MCF 10A (cell line): ENCODE measurements at regions of chr1 and their contacts with region 1.

Region 1: DNA sequence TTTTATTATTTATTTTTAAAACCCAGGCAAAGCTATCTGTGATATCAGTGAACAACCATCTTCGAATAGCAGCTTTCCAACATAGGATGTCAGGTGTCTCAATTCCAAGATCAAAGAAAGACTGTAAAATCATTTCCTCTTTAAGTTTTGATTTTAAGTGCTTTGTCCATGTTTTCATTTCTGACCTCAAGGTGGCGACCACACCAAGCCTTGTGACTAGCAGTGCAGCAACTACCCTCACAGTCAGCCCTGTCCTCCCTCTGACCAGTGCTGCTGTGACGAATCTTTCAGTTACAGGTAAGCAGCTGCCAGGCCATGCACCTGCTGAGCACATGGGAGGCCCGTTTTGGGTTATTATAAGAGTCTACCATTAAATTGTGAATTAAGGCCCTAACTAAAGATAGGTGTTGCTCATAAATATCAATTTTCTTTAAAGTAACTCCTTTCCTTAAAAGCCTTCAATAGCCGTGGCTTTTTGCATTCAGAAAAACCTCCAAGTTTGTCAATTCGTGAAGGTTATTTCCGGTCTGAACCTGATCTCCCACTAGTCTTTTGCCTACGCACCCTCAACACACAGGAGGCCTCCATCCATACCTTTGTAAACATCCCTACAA is 117.0 kb downstream of the CD247 start:
- DNase-seq: peak; percentile 76
- H3K4me3 Mint-ChIP-seq: no peak overlapping the region
- H3K27ac Mint-ChIP-seq: peak overlapping the region; percentile 23
- H3K4me1 Mint-ChIP-seq: peaks cover 6% of the 10 kb centered on the region
- H3K27me3 Mint-ChIP-seq: no peaks in the 10 kb centered on the region
- CTCF ChIP-seq: peak; percentile 72

Region 2: GRCh38 chr1:167273027-167273800 is 128.2 kb before region 1 on chr1:
- CTCF ChIA-PET with region 1: interaction called, 34 read pairs
- POLR2A ChIA-PET with region 1: interaction called, 5 read pairs
- intact Hi-C with region 1: loop called (anchors 1 kb)
- DNase-seq: peak; percentile 86
- H3K4me3 Mint-ChIP-seq: no peak overlapping the region
- H3K27ac Mint-ChIP-seq: peak overlapping the region; percentile 23
- H3K4me1 Mint-ChIP-seq: peaks cover 42% of the 10 kb centered on the region
- H3K27me3 Mint-ChIP-seq: no peaks in the 10 kb centered on the region
- CTCF ChIP-seq: no peak

Region 3: DNA sequence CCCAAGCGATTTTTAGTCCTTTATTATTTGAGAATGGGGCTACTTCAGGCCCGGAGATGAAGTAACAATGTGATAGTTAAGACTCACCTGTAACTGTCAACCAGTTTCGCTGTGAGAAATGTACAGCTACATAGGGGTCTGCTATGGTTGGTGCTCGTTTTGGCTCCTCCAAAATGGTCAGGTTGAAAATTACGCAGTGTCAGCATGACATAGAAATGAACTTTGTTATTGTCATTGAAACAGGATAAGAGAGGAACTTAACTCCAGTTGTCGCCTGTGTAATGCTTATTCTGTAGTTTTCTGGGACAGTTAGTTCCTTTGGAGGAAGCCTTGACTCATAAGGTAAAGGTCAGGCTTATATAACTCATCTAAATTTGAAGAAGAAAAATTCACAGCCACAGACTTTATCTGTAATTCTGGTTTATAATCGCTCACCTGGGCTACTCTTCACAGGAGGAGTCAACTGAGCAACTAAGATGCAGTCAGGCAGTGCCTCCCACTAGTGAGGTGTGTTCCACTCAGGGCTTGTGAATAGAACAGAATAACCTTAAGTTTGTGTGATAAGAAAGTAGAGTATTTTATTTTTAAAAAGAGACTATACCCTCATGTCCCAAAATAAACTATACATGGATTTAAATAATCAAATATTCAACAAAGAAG is 14.0 kb before region 1 on chr1:
- CTCF ChIA-PET with region 1: interaction called, 24 read pairs
- POLR2A ChIA-PET with region 1: interaction called, 3 read pairs
- intact Hi-C with region 1: no loop called
- DNase-seq: no peak
- H3K4me3 Mint-ChIP-seq: no peak overlapping the region
- H3K27ac Mint-ChIP-seq: no peak overlapping the region
- H3K4me1 Mint-ChIP-seq: no peaks in the 10 kb centered on the region
- H3K27me3 Mint-ChIP-seq: no peaks in the 10 kb centered on the region
- CTCF ChIP-seq: no peak

Region 4: DNA sequence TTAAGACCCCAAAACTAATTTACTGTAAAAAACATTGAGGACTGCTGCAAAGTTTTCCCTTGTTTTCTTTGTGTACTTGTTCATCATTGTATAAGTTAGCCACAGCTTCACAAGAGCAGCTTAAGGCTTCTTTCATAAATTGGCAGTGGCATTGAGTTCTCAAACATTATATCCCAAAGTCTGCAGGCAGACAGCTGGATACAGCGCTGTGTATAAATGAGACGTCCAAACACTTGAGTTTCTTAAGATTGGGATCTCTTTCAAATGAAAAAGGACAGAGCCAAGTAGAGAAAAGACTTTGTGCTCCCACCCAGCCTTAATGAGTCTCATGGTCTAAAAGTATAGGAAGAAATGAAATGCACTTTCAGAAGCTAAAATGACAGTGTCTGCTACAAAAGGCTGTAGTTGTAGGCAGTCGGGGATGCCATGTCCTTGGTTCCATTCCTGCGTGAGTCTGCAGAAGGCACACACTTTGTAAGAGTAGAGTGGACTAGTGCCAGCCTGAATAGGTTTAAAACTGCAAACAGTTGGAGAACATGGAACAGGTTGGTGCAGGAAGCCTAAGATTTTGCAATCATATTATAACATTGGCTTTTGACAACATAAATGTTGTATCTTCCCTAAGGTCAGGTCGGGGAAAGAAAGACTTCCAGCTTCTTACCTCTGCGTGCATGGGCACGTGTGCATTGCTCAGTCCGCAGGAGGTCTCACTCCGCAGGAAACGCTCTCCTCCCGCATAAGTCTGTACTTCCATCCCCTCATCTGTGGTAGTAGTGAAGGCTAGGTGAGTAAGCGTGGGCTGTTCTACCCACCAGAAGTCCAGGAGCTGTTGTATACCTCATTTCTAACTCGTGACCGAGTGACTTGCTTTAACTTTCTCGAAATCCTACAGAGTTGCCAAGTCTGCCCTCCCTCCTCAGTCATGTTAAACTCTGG is 22.6 kb after region 1 on chr1:
- CTCF ChIA-PET with region 1: interaction called, 13 read pairs
- POLR2A ChIA-PET with region 1: no interaction called
- intact Hi-C with region 1: no loop called
- DNase-seq: no peak
- H3K4me3 Mint-ChIP-seq: no peak overlapping the region
- H3K27ac Mint-ChIP-seq: no peak overlapping the region
- H3K4me1 Mint-ChIP-seq: peaks cover 6% of the 10 kb centered on the region
- H3K27me3 Mint-ChIP-seq: no peaks in the 10 kb centered on the region
- CTCF ChIP-seq: no peak

Region 5: DNA sequence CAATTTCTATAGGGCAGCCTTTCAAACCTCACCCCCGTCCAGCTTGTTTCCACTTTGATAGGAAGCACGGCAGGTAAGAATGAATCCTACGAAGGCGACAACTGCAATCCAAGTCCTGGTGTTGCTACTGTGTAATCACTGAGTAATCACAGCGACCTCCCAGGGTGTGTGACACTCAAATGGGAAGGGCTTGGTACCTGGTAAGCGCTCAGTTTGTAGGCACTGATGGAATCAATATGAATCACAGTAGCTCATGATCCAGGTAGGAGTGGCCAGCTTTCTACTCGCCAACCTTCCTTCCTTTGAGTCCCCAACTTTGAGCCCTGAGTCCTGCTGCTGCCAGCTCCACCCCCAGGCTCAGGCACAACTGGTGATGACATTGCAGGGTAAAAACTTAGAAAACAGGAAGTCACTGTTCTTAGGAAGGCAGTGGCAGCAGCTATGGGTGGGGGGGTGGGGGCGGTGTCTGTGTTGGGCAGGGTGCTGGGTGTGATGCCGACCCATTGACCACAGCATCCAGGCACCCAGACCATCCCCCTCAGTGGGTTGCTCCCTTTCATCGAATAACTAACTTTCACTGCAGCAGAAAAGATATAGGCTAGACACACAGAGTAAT is 46.3 kb after region 1 on chr1:
- CTCF ChIA-PET with region 1: interaction called, 49 read pairs
- POLR2A ChIA-PET with region 1: interaction called, 3 read pairs
- intact Hi-C with region 1: loop called (anchors 1 kb)
- DNase-seq: peak; percentile 60
- H3K4me3 Mint-ChIP-seq: no peak overlapping the region
- H3K27ac Mint-ChIP-seq: peak overlapping the region; percentile 31
- H3K4me1 Mint-ChIP-seq: no peaks in the 10 kb centered on the region
- H3K27me3 Mint-ChIP-seq: no peaks in the 10 kb centered on the region
- CTCF ChIP-seq: no peak

Region 6: DNA sequence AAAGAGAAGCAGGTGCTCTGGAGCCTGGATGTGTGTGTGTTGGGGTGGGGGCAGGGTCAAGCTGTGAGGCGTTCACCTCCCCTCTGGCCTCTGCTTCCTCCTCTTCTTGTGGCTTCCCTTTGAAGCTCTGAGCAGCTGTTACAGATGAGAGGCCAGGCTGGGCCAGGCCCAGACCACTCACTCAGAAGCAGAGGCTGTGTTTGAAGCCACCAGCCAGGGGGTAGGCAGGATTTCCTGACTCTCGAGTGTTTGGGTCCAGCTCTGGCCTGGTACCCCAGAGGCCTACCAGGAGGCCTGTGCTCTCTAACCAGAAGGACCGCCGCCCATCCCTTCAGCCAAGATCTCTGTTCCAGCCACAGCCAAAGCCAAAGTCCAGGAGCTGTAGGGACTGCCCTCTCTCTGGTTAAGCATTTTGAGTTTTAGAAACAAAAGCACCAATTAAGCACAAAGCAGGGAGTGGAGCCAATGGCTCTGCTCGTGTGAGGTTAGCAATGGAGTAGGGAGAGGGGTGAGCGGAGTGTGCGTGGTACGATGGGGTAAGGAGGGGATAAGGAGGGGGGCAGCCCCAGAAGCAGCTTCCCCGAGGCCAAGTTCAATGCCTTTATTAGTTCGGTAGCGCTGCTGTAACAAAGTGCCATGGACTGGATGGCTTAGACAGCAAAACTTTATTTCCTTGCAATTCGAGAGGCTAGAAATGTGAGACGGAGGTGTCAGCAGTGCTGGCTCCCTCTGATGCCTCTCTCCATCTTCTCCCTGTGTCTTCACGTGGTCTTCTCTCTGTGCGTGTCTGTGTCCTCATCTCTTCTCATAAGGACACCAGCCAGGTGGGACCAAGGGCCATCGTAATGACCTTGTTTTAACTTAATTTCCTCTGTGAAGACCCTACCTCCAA is 249.1 kb after region 1 on chr1:
- CTCF ChIA-PET with region 1: no interaction called
- POLR2A ChIA-PET with region 1: no interaction called
- intact Hi-C with region 1: no loop called
- DNase-seq: no peak
- H3K4me3 Mint-ChIP-seq: no peak overlapping the region
- H3K27ac Mint-ChIP-seq: no peak overlapping the region
- H3K4me1 Mint-ChIP-seq: no peaks in the 10 kb centered on the region
- H3K27me3 Mint-ChIP-seq: no peaks in the 10 kb centered on the region
- CTCF ChIP-seq: no peak